PC-9 (cell line): ENCODE measurements at regions of chr2 and their contacts with region 1.

Region 1: GRCh38 chr2:24360050-24360962 is at the start of gene ITSN2:
- DNase-seq: peak; percentile 64 to 77
- H3K4me3 ChIP-seq: peak within 1 kb of the TSS; percentile 97
- H3K27ac ChIP-seq: peak within 1 kb of the TSS; percentile 54
- H3K4me1 ChIP-seq: peaks cover 30% of the 10 kb centered on the region
- H3K27me3 ChIP-seq: no peaks in the 10 kb centered on the region
- CTCF ChIP-seq: no peak
- total RNA-seq, gene ITSN2: 28.4 and 30.4 TPM in 2 replicates

Region 2: GRCh38 chr2:23404426-23404825 is 955.9 kb before region 1 on chr2:
- CTCF ChIA-PET with region 1: no interaction called
- POLR2A ChIA-PET with region 1: no interaction called
- intact Hi-C with region 1: no loop called
- DNase-seq: peak; percentile 33 to 59
- H3K4me3 ChIP-seq: no peak overlapping the region
- H3K27ac ChIP-seq: no peak overlapping the region
- H3K4me1 ChIP-seq: no peaks in the 10 kb centered on the region; the same call in 1 of the 2 replicates
- H3K27me3 ChIP-seq: no peaks in the 10 kb centered on the region
- CTCF ChIP-seq: no peak

Region 3: GRCh38 chr2:24214880-24215279 is 145.4 kb before region 1 on chr2:
- CTCF ChIA-PET with region 1: no interaction called
- POLR2A ChIA-PET with region 1: no interaction called
- intact Hi-C with region 1: no loop called
- DNase-seq: no peak
- H3K4me3 ChIP-seq: no peak overlapping the region
- H3K27ac ChIP-seq: no peak overlapping the region
- H3K4me1 ChIP-seq: peaks cover 6% of the 10 kb centered on the region; the same call in 1 of the 2 replicates
- H3K27me3 ChIP-seq: no peaks in the 10 kb centered on the region
- CTCF ChIP-seq: no peak

Region 4: GRCh38 chr2:24228470-24228869 is 131.8 kb before region 1 on chr2:
- CTCF ChIA-PET with region 1: no interaction called
- POLR2A ChIA-PET with region 1: no interaction called
- intact Hi-C with region 1: loop called (anchors 10 kb)
- DNase-seq: peak in 1 of 2 experiments; percentile 40
- H3K4me3 ChIP-seq: no peak overlapping the region
- H3K27ac ChIP-seq: no peak overlapping the region
- H3K4me1 ChIP-seq: no peaks in the 10 kb centered on the region
- H3K27me3 ChIP-seq: no peaks in the 10 kb centered on the region
- CTCF ChIP-seq: peak; percentile 62

Region 5: DNA sequence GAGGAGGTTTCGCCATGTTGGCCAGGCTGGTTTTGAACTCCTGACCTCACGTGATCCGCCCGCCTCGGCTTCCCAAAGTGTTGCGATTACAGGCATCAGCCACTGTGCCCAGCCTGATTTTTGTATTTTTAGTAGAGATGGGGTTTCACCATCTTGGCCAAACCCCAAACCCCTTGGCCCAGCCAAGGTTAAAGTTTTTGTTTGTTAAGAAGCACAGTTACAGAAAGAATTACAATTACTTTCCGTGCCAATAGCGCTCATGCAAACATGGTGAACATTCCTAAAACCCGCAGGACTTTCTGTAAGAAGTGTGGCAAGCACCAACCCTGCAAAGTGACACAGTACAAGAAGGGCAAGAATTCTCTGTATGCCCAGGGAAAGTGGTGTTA is 26.1 kb before region 1 on chr2:
- CTCF ChIA-PET with region 1: no interaction called
- POLR2A ChIA-PET with region 1: interaction called, 11 read pairs
- intact Hi-C with region 1: no loop called
- DNase-seq: peak; percentile 6 to 38
- H3K4me3 ChIP-seq: no peak overlapping the region
- H3K27ac ChIP-seq: no peak overlapping the region
- H3K4me1 ChIP-seq: no peaks in the 10 kb centered on the region
- H3K27me3 ChIP-seq: no peaks in the 10 kb centered on the region
- CTCF ChIP-seq: no peak

Region 6: DNA sequence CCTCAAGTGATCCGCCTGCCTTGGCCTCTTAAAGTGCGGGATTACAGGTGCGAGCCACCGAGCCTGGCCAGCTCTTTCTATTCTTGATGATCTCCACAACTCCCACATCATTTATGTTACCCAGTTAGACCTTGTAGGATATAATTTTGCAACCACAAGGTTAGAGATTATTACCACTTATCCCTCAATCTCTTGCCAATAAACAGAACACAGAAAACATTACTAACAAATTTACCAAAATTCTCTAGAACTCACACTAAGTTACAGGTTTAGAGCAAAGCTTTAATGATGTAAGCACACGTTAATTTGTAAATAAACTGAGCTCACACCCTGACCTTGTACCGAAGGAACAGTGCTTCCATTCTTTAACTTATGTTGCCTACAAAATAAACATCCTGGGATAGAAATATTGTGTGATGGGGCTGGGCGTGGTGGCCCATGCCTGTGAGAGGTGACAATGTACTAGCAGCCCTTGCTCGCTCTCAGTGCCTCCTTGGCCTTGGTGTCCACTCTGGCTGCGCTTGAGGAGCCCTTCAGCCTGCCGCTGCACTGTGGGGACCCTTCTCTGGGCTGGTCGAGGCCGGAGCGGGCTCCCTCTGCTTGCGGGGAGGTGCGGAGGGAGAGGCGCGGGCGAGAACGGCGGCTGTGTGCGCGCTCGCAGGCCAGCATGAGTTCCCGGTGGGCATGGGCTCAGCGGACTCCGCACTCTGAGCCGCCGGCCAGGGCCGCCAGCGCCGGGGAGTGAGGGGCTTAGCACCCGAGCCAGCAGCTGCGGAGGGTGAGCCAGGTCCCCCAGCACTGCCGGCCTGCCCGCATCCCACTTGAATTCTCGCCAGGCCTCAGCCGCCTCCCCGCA is 42.2 kb after region 1 on chr2:
- CTCF ChIA-PET with region 1: no interaction called
- POLR2A ChIA-PET with region 1: no interaction called
- intact Hi-C with region 1: no loop called
- DNase-seq: no peak
- H3K4me3 ChIP-seq: no peak overlapping the region
- H3K27ac ChIP-seq: no peak overlapping the region
- H3K4me1 ChIP-seq: no peaks in the 10 kb centered on the region
- H3K27me3 ChIP-seq: no peaks in the 10 kb centered on the region
- CTCF ChIP-seq: no peak

Region 7: DNA sequence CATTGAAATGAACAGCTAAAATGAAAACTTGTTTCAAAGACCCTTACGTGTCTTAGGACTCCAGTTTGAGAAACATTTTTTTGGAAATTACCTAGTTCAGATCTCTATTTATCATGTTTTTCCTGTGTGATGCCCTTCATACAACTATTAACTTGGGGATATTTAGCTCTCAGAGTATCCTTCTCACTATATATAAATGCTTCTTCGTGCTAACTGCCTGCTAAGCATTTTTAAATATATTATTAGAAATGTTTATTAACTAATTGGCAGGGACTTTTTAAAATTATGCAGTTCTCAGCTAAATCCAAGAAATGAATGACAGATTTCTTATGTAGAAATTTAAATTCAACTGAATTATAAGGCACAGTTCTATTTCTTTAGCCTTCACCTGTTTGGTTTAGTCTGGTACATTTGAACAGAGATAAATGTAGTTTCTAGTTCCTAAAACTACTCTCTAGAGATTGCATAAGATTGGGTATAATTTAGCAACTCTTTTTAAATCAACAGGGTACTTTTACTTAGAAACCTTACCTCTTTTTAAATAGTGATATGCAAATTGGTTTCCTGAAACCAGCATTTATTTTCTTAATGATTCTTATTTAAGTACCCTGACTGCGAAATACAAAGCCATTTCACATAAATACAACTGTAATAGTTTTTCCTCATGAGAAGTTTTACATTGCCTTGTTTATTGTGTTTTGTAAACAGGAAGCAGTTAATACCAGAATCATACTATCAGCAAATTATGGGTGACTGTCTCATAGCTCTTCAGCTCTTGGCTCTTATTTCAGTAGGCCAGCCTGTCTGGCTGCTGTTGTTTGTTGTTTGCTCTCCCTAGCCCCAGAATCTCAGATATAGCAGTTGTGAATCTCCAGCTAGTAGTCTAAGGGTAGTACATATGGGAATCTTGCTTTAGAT is 292.2 kb after region 1 on chr2:
- CTCF ChIA-PET with region 1: no interaction called
- POLR2A ChIA-PET with region 1: no interaction called
- intact Hi-C with region 1: no loop called
- DNase-seq: no peak
- H3K4me3 ChIP-seq: no peak overlapping the region
- H3K27ac ChIP-seq: no peak overlapping the region
- H3K4me1 ChIP-seq: 0 out of 2 replicates have a peak, but pooled peaks cover 3% of the 10 kb centered on the region
- H3K27me3 ChIP-seq: no peaks in the 10 kb centered on the region
- CTCF ChIP-seq: no peak